ENCODE measurements at regions of chr16 and their contacts with region 1.

Region 1: DNA sequence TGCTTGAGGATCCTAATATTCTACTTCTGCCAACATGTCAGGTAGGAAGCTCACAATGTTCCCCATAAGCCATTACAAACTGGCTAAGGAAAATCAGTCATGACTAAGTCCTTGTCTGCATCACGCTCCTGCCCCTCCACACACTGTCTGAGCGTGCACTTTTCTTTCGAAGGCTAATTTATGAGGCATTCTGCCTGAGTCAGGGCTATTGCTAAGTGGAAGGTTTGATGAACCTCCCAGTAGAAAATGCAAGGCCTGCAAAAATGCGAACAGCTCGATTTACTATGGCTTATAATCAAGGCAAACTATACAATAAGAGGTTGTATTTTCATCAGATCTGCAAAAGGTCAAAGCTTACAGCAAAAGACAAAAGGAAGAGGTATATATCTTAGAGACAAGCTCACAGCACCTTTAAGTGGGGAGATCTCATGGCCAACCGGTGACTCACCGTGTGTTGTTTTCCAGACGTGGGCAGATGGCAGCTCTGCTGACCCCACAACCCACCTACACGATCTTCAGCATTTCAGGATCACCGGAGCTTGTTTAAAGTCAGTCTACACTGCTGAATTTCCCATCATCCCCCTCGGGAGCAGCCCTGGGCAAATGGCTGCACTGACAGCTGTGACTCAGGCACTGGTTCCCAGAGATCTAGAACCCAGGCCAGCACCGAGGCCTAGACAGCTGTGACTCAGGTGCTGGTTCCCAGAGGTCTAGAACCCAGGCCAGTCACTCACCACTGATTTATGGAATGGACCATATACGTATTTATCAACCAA is 26.1 kb downstream of the MEAK7 start:
- DNase-seq: no peak
- H3K4me3 ChIP-seq: no peak overlapping the region
- H3K4me1 ChIP-seq: peaks cover 4% of the 10 kb centered on the region; the same call in 1 of the 2 replicates
- H3K27me3 ChIP-seq: no peaks in the 10 kb centered on the region

Region 2: DNA sequence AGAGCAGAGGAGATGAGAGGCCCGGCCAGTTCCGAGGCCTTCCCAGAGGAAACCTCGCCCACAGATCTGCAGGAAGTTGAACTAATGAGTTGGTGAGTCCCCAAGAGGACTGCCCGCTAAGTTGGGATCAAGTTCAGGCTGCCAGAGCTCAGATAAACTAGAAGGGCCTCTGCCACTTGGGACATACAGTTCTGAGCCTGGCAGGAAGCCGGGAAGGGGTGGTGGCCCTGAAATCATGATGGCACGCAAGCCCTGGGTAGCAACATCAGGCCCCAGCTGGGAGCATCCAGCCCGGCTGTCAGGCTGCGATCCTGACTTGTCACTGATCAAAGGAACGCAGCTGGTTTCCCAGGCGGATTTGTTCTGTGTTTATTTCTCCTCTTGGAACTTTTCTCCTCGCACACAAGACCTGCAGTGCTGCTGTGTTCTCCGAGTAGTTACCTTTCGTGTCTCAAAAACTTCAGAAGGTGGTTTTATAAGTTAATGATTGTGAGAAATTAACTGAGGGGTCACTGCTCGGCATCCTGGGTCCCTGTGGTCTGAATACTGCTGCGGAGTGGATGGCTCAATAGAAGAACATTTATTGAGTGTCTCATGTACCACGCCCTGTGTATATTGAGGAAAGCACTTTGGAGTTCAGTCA is 191.7 kb before region 1 on chr16:
- in situ Hi-C with region 1: loop called (anchors 5 kb)
- DNase-seq: no peak
- H3K4me3 ChIP-seq: no peak overlapping the region
- H3K4me1 ChIP-seq: no peaks in the 10 kb centered on the region
- H3K27me3 ChIP-seq: peaks cover 6% of the 10 kb centered on the region

Region 3: DNA sequence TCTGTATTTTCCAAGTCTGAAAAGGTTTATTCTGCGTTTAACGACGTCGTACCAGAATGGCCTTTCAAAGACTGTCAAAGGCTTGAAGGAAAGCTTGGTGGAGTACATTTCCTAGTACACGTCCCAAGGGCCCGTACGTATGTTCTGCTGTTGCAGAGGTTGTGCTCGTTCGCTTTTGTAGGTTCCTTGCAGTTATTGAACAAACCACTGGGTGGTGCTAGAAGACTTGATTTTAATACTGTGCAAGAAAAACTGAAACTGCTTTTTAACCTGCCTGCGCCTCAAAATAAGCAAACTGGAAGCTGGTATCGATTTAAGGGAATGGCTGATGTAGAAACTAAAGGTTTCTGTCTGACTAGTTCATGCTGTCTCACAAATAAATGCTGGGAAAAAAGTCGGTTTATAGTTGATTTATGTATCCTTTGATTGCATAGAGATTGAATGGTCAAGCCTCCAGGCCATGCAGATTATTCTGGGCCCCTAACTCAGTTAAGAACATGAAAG is 276.0 kb after region 1 on chr16:
- in situ Hi-C with region 1: no loop called
- DNase-seq: peak; percentile 76 to 85
- H3K4me3 ChIP-seq: no peak overlapping the region
- H3K4me1 ChIP-seq: peaks cover 14% of the 10 kb centered on the region
- H3K27me3 ChIP-seq: no peaks in the 10 kb centered on the region